ENCODE measurements at regions of chr17 and their contacts with region 1.

Region 1: DNA sequence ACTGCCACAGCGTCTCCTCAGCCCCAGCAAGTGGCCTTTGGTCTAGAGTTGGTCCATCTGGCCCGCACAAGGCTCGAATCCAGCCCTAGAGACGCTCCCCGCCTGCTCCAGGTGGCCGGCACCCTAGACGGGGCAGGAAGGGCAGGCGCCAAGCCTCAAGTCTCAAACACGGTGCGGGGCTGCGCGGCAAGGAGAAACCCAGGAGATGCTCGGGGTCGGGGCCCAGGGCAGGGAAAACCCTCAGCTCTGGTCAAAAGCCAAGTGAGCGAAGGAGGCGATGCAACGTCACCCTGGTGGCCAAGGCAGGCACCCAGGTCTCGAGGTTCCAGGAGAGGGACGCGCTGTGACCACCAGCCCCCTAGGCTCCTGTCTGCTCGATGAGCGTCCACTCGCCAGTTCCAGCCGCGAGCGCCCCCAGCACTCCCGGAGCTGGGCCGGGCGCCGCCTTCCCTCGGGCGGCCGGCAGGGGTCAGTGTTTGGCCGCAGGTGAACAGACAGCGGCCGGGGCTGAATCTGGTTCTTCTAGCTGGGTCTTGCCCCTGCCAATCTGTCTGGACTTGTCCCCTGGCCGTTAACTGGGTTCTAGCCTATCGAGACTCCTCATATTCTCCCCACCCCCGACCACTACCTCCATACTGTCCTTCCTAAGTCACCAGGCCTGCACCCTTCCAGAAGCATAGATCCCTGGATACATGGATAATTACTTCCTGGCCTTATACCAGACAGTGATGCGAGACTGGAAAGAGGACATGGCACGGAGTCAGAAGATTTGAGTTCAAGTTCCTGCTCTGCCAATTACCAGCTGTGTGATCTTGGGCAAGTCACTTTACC is 44.0 kb downstream of the PRAC1 start:
- DNase-seq: peak; percentile 68
- H3K4me3 ChIP-seq: no peak overlapping the region
- H3K27ac ChIP-seq: no peak overlapping the region
- H3K4me1 ChIP-seq: peaks cover 0 to 6% (median 3%) of the 10 kb centered on the region in 4 donors
- H3K27me3 ChIP-seq: peaks cover 12% of the 10 kb centered on the region
- CTCF ChIP-seq: peak; percentile 86 to 95 (median 92)
- EP300 ChIP-seq: no peak
- POLR2A ChIP-seq: no peak

Region 2: GRCh38 chr17:48578616-48579470 is 99.5 kb before region 1 on chr17:
- in situ Hi-C with region 1: no loop called
- intact Hi-C with region 1: no loop called
- DNase-seq: no peak
- H3K4me3 ChIP-seq: peak overlapping the region; percentile 38 to 54 (median 46)
- H3K27ac ChIP-seq: peak overlapping the region; percentile 89 to 95 (median 92)
- H3K4me1 ChIP-seq: peaks cover 21 to 86% (median 73%) of the 10 kb centered on the region in 4 donors
- H3K27me3 ChIP-seq: peaks cover 9% of the 10 kb centered on the region
- CTCF ChIP-seq: no peak
- EP300 ChIP-seq: no peak
- POLR2A ChIP-seq: no peak

Region 3: DNA sequence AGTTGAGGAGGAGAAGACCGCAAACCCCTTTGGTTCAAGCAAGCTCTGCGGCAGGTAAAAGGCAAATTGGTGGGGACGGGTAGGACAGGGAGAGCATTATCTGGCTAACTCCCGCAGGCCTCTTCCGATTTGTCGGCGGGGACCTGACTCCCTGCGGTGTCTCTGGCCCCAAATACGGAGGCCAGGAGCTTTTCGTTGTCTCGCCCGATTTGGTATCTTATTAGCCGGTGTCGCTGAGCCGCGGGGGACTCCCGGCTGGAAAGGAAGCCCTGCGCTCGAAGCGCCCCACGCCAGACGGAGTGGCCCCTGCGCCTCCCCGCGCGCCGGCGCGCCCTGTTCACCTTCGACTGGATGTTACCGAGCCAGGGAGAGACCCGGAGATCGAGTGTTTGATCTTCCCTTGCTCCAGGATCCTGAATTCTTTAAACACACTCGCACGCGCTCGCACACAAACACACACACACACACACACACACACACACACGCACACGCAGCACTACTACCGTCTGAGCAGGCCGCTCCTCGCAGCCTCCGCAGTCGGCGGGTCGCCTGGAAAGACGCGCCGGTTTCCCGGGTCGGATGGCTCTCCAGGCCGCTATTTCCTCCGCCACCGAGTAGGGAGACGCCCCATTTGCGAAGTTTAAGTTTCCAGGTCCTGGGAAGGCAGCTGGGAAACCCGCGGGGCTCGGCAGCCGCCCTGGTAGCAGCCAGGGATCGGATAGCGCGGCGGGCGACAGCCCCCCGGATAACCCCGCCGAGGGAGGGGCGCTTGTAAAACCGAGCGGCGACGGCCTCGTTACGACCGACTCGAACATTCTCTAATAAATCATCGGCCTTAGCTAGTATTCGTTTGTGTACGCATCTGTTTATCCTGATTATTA is 40.6 kb after region 1 on chr17:
- in situ Hi-C with region 1: no loop called
- intact Hi-C with region 1: no loop called
- DNase-seq: no peak
- H3K4me3 ChIP-seq: peak overlapping the region in 2 of 4 donors; percentile 14 to 43
- H3K27ac ChIP-seq: peak overlapping the region in 1 of 4 donors; percentile 74
- H3K4me1 ChIP-seq: peaks cover 9 to 33% (median 25%) of the 10 kb centered on the region in 4 donors
- H3K27me3 ChIP-seq: peaks cover 100% of the 10 kb centered on the region
- CTCF ChIP-seq: no peak
- EP300 ChIP-seq: no peak
- POLR2A ChIP-seq: no peak

Region 4: DNA sequence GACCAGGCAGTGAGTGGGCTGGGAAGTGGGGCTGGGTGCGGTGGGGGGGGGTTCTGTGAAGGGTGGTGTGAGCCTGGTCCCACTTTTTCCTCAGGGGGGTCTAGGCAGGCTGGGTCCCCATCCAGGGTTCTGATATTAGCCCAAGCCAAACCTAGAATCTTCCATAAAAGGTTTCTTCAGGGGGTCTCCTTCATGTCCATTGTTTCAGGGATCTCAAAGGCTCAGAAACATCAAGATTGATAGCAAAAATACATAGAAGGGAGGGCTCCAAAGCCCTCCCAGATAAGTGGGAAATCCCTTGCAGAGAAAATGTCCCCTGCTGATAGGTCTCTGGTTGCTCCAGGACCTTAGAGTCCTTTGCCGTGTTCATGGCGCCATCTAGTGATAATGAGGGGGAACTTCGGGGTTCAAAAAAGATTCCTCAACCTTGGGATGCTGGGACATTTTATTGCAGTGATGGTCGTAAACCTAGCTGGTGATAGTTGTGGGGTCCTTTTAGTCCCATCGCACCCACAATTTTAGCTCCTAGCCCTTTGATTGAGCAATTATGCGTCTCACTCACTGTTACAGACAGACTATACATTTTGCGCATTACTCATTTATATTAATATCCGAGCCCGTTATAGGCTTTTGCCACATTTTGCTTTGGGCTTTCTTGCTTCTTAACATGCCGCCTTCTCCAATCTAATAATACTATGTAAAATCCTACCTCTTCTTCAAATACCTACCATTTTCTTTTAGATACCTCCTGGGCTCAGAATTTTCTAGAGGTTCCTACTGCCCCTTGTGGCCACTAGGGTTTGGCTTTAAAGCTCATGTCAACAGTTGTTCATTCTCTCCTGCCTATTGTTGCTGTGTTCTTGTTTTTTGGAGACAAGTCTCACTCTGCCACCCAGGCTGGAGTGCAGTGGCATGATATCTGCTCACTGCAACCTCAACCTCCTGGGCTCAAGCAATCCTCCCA is 353.9 kb after region 1 on chr17:
- in situ Hi-C with region 1: loop called in 1 of 4 experiments (anchors 25 kb)
- intact Hi-C with region 1: no loop called
- DNase-seq: peak; percentile 50
- H3K4me3 ChIP-seq: no peak overlapping the region
- H3K27ac ChIP-seq: no peak overlapping the region
- H3K4me1 ChIP-seq: peaks cover 0 to 6% (median 3%) of the 10 kb centered on the region in 4 donors
- H3K27me3 ChIP-seq: peaks cover 13% of the 10 kb centered on the region
- CTCF ChIP-seq: peak; percentile 64 to 79 (median 72)
- EP300 ChIP-seq: no peak
- POLR2A ChIP-seq: no peak

Measured in transverse colon (tissue), 4 donors.